ENCODE measurements at regions of chr7 and their contacts with region 1.

Region 1: GRCh38 chr7:27936047-27936767 is 196.2 kb downstream of the TAX1BP1 start:
- DNase-seq: no peak
- ATAC-seq: no peak
- H3K4me3 ChIP-seq: no peak overlapping the region
- H3K27ac ChIP-seq: peak overlapping the region; percentile 11; the same call in 1 of the 2 replicates
- H3K4me1 ChIP-seq: peaks cover 10% of the 10 kb centered on the region; the same call in 1 of the 2 replicates
- H3K27me3 ChIP-seq: no peaks in the 10 kb centered on the region
- CTCF ChIP-seq: no peak

Region 2: GRCh38 chr7:28013019-28013418 is 76.8 kb after region 1 on chr7:
- CTCF ChIA-PET with region 1: no interaction called
- POLR2A ChIA-PET with region 1: no interaction called
- in situ Hi-C with region 1: no loop called
- intact Hi-C with region 1: loop called (anchors 5 kb)
- DNase-seq: no peak
- ATAC-seq: no peak
- H3K4me3 ChIP-seq: no peak overlapping the region
- H3K27ac ChIP-seq: no peak overlapping the region
- H3K4me1 ChIP-seq: no peaks in the 10 kb centered on the region
- H3K27me3 ChIP-seq: no peaks in the 10 kb centered on the region
- CTCF ChIP-seq: no peak

Measured in Panc1 (cell line).